ENCODE measurements at regions of chr12 and their contacts with region 1.

Region 1: GRCh38 chr12:94149119-94149780 is 873 bp downstream of the PLXNC1 start:
- DNase-seq: peak; percentile 54 to 61 (median 56)
- H3K4me3 ChIP-seq: peak overlapping the region; percentile 88 to 95 (median 92)
- H3K4me3 Mint-ChIP-seq: peak overlapping the region; percentile 99
- H3K27ac ChIP-seq: peak overlapping the region; percentile 20 to 74
- H3K27ac Mint-ChIP-seq: peak overlapping the region in 6 of 7 donors; percentile 31 to 93 (median 82)
- H3K4me1 ChIP-seq: peaks cover 37 to 41% of the 10 kb centered on the region in 2 donors
- H3K4me1 Mint-ChIP-seq: peaks cover 51% of the 10 kb centered on the region
- H3K27me3 ChIP-seq: no peaks in the 10 kb centered on the region
- H3K27me3 Mint-ChIP-seq: peaks cover 3 to 14% (median 10%) of the 10 kb centered on the region in 3 donors
- CTCF ChIP-seq: peak; percentile 61

Region 2: GRCh38 chr12:94172973-94173372 is 23.7 kb after region 1 on chr12:
- intact Hi-C with region 1: loop called in 1 of 2 experiments (anchors 2 kb)
- DNase-seq: peak; percentile 94 to 99 (median 96)
- H3K4me3 ChIP-seq: peak overlapping the region in 1 of 3 experiments; percentile 57
- H3K4me3 Mint-ChIP-seq: peak overlapping the region; percentile 39 to 56
- H3K27ac ChIP-seq: peak overlapping the region; percentile 95 to 97
- H3K27ac Mint-ChIP-seq: peak overlapping the region; percentile 91 to 98 (median 96)
- H3K4me1 ChIP-seq: peaks cover 52 to 53% of the 10 kb centered on the region in 2 donors
- H3K4me1 Mint-ChIP-seq: peaks cover 64% of the 10 kb centered on the region
- H3K27me3 ChIP-seq: no peaks in the 10 kb centered on the region
- H3K27me3 Mint-ChIP-seq: peaks cover 0 to 2% (median 0%) of the 10 kb centered on the region in 3 donors
- CTCF ChIP-seq: no peak

Region 3: DNA sequence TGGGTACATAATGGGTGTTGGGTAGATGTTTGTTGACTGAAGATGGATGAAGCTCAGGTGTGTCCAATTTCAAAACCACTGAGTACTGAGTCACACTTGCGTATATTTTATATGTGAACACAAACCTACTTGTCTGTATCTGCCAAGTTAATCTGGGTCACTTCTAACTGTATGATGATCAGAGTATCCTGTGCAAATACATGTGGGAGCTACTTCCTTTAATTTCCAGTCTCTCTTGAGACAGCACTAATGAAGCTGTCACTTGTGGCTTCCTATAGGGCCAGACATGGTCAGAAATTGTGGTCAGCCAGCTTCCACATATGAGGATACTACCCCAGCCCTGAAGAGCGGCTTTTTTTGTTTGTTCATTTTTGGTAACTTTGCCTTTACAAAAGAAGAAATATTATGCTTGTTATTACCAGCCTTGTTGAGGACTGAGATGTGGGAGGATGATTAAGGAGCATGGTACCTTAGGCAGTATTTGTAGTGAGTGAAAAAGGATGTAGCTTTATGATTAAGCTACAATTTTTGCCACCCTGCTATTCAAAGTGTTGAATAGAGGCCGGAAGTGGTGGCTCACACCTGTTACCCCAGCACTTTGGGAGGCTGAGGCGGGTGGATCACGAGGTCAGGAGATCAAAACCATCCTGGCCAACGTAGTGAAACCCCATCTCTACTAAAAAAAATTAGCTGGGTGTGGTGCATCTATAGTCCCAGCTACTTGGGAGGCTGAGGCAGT is 31.5 kb after region 1 on chr12:
- intact Hi-C with region 1: loop called in 1 of 2 experiments (anchors 5 kb)
- DNase-seq: peak; percentile 76 to 84 (median 78)
- H3K4me3 ChIP-seq: no peak overlapping the region
- H3K4me3 Mint-ChIP-seq: no peak overlapping the region
- H3K27ac ChIP-seq: peak overlapping the region in 1 of 2 donors; percentile 67
- H3K27ac Mint-ChIP-seq: peak overlapping the region; percentile 34 to 79 (median 72)
- H3K4me1 ChIP-seq: peaks cover 34 to 35% of the 10 kb centered on the region in 2 donors
- H3K4me1 Mint-ChIP-seq: peaks cover 28% of the 10 kb centered on the region
- H3K27me3 ChIP-seq: no peaks in the 10 kb centered on the region
- H3K27me3 Mint-ChIP-seq: peaks cover 0 to 5% (median 2%) of the 10 kb centered on the region in 3 donors
- CTCF ChIP-seq: no peak

Region 4: DNA sequence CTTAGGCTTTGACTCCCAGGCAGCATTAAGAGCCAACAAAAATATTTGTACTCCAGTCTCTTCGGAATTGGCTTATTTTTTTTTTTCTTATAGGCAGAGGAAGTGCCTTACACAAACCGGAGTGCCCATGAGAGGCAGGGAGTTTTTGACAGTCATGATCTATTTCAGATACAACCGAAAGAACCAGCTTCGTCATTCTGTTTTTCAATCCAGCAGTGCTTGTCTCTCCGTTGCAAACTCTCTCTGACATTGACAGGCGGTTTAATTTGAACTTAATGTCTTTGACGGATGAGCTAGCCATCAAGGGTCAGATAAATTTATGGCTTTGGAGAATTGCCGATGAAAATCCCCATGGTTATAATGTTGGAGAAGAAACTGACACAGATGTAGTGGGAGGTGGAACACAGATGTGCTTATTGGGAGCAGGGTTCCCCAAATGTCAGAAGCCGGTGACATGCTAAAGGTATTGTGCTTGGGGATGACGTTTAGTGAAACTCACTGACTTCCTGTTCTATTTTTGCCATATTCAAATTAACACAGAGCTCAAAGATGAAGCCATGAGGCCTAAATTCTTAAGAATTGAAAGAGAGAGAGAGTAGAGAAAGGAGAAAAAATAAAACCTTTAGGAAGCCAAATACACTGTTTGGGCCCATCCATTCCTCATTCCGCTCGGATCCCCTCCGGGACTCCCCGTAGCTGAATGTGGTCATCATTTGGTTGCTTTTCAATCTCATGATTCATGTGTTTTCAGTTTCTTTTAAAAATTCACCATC is 58.8 kb after region 1 on chr12:
- intact Hi-C with region 1: loop called in 1 of 2 experiments (anchors 5 kb)
- DNase-seq: peak; percentile 73 to 94 (median 75)
- H3K4me3 ChIP-seq: peak overlapping the region; percentile 26 to 67 (median 61)
- H3K4me3 Mint-ChIP-seq: peak overlapping the region; percentile 56 to 79
- H3K27ac ChIP-seq: peak overlapping the region; percentile 91 to 99
- H3K27ac Mint-ChIP-seq: peak overlapping the region; percentile 95 to 100 (median 98)
- H3K4me1 ChIP-seq: peaks cover 60 to 61% of the 10 kb centered on the region in 2 donors
- H3K4me1 Mint-ChIP-seq: peaks cover 60% of the 10 kb centered on the region
- H3K27me3 ChIP-seq: no peaks in the 10 kb centered on the region
- H3K27me3 Mint-ChIP-seq: no peaks in the 10 kb centered on the region
- CTCF ChIP-seq: no peak

Region 5: GRCh38 chr12:94262228-94263010 is 113.2 kb after region 1 on chr12:
- intact Hi-C with region 1: loop called (anchors 10 kb)
- DNase-seq: peak; percentile 68 to 75 (median 73)
- H3K4me3 ChIP-seq: peak overlapping the region; percentile 49 to 79 (median 61)
- H3K4me3 Mint-ChIP-seq: peak overlapping the region; percentile 85 to 93
- H3K27ac ChIP-seq: peak overlapping the region; percentile 88 to 92
- H3K27ac Mint-ChIP-seq: peak overlapping the region; percentile 95 to 98 (median 98)
- H3K4me1 ChIP-seq: peaks cover 57 to 61% of the 10 kb centered on the region in 2 donors
- H3K4me1 Mint-ChIP-seq: peaks cover 52% of the 10 kb centered on the region
- H3K27me3 ChIP-seq: no peaks in the 10 kb centered on the region
- H3K27me3 Mint-ChIP-seq: no peaks in the 10 kb centered on the region
- CTCF ChIP-seq: no peak

Region 6: DNA sequence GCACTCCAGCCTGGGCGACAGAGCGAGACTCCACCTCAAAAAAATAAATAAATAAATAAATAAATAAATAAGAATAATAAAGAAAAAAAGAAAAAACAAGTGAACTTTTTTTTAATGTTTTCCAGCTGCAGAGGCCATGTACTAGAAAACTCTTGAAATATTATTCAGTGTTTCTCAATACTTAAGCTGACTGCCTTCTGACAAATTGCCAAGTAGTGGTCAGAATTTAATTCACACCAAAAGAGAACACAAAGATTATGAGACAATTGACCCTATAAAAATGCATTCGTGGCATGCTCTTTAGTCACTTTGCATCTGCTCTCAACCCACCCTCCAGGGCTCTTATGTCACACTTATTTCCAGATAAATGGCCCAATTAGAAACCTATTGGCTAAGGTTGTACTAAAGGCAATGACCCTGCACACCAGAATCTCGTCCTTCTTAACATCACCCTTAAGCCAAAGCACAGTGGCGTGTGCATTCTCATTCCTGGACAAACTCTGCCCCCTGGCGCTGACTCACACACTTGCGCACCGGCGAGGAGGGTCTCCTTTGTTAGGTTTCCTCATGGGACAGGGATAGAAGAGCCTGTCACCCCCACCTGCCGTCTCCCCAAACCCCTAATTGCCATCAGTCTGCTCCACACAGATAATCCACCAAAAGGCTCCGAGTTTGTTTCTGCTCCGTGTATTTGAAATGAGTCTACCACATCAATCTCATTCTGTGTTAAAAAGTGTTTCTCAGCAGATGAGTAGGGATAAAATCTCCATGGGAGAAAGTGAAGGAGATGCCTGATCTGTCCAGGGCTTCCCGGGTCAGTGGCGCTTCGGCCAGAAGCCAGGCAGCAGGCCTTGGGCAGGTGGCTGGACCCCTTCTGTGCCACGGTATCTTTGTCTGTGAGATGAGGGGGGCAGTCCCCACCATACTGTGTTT is 383.5 kb after region 1 on chr12:
- intact Hi-C with region 1: loop called in 1 of 2 experiments (anchors 5 kb)
- DNase-seq: peak; percentile 34 to 56 (median 44)
- H3K4me3 ChIP-seq: no peak overlapping the region
- H3K4me3 Mint-ChIP-seq: no peak overlapping the region
- H3K27ac ChIP-seq: no peak overlapping the region
- H3K27ac Mint-ChIP-seq: peak overlapping the region in 2 of 7 donors; percentile 21 to 30
- H3K4me1 ChIP-seq: no peaks in the 10 kb centered on the region
- H3K4me1 Mint-ChIP-seq: peaks cover 6% of the 10 kb centered on the region
- H3K27me3 ChIP-seq: no peaks in the 10 kb centered on the region
- H3K27me3 Mint-ChIP-seq: peaks cover 2 to 6% (median 2%) of the 10 kb centered on the region in 3 donors
- CTCF ChIP-seq: peak; percentile 78